Activated CD4-positive, alpha-beta memory T cell treated with anti-CD3 and anti-CD28 coated beads for 36 hours (primary cell): ENCODE measurements at regions of chr5 and their contacts with region 1.

Region 1: GRCh38 chr5:163564321-163564938 is 59.0 kb downstream of the MAT2B start:
- DNase-seq: peak; percentile 76
- H3K4me3 Mint-ChIP-seq: no peak overlapping the region
- H3K27ac Mint-ChIP-seq: no peak overlapping the region
- H3K4me1 Mint-ChIP-seq: peaks cover 25% of the 10 kb centered on the region
- H3K27me3 Mint-ChIP-seq: peaks cover 46% of the 10 kb centered on the region

Region 2: DNA sequence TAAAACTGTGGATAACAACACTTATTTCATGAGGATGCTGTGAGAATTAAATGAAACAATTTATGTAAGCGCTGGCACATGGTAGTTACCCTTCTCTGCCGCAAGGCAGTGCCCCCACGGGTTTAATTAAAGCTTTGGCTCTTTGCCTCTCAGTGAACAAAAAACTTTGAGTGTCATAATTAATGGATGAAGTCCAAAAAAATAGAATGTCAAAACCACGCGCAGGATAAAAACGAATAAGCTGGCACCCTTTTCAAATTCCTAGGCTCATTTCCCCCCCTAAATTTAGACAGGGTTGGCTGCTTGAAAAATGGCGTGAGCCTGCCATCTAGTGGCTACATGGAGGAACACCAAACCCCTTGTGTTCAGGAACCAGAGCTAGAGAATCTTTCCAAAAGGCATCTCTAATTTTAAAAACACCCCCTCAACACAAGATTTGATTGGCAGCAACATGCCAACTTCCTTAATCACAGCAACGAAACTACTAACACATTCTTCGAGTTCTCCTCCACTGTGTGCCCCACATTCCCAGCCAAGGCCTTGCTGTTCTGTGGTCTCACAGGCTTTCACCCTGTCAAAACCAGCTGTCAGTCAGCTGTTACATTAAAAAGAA is 156.0 kb before region 1 on chr5:
- CTCF ChIA-PET with region 1: no interaction called
- POLR2A ChIA-PET with region 1: no interaction called
- intact Hi-C with region 1: loop called (anchors 1 kb)
- DNase-seq: peak; percentile 66
- H3K4me3 Mint-ChIP-seq: no peak overlapping the region
- H3K27ac Mint-ChIP-seq: no peak overlapping the region
- H3K4me1 Mint-ChIP-seq: peaks cover 2% of the 10 kb centered on the region
- H3K27me3 Mint-ChIP-seq: peaks cover 4% of the 10 kb centered on the region

Region 3: GRCh38 chr5:163505368-163506094 is 58.9 kb before region 1 on chr5 and contains the start of gene MAT2B:
- CTCF ChIA-PET with region 1: no interaction called
- POLR2A ChIA-PET with region 1: no interaction called
- intact Hi-C with region 1: loop called (anchors 1 kb)
- DNase-seq: peak; percentile 97
- H3K4me3 Mint-ChIP-seq: peak within 1 kb of the TSS; percentile 95
- H3K27ac Mint-ChIP-seq: peak within 1 kb of the TSS; percentile 100
- H3K4me1 Mint-ChIP-seq: peaks cover 28% of the 10 kb centered on the region
- H3K27me3 Mint-ChIP-seq: no peaks in the 10 kb centered on the region
- total RNA-seq, gene MAT2B: 114 to 122 TPM

Region 4: DNA sequence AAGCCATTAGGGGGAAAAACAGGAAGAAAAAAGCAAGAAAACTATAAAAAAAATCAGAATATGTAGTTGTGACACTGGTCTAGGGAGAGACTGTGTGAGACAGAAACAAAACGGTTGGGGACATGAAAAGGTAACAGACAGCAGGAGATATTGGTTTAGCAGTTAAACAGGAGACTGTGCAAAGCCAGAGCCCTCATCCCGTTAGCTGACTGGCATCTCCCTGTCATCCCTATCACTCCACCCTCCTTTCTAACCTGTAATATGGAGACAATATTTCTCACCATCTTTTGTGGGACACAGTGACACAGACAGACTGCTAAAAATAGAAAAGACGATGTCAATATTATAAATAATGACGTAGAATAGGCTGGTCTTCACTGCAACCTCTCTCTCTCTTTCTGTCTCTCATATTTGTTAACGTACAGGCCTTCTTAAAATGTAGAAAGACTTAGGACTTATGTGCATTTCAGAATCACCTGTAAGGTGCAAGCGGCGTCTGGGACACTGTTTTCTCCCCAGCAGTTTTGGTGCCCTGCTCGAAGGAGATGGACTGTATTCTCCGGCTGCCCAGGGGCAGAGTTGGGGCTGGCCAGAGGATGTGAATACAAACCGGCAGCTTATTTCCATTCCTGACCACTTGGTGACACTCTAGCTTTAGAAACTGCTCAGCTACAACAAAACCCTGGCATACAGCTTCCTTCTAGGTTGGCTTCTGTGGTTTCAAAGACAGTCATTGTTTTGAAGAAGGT is 131.6 kb after region 1 on chr5:
- CTCF ChIA-PET with region 1: no interaction called
- POLR2A ChIA-PET with region 1: no interaction called
- intact Hi-C with region 1: loop called (anchors 10 kb)
- DNase-seq: no peak
- H3K4me3 Mint-ChIP-seq: no peak overlapping the region
- H3K27ac Mint-ChIP-seq: no peak overlapping the region
- H3K4me1 Mint-ChIP-seq: no peaks in the 10 kb centered on the region
- H3K27me3 Mint-ChIP-seq: no peaks in the 10 kb centered on the region

Region 5: DNA sequence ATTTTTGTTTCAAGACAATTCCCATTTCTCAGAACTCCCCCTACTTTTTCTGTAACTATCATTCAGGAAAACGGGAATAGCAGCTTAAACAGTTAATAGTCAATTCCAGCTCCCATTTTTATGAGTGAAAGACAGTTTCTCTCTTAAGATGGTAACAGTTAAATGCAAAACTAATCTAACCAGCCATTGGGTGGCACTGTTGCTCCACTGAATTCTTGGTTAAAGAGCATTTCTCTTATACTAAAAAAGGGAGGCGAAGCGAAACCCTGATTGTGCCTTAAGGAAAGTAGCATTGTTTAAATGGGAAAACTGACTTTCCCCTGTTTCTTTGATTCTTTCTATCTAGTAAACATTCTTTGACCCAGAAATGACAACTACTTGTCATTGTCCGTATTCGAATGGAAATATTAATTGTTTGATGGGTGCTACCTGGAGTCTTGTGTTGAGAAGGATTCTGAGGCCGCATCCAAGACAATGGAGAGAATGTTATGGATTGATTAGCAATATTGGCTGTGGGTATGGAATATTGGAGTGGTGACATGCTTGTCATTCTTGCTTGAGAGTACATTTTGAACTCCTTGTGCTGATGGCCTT is 448.7 kb after region 1 on chr5:
- CTCF ChIA-PET with region 1: no interaction called
- POLR2A ChIA-PET with region 1: no interaction called
- intact Hi-C with region 1: loop called (anchors 1 kb)
- DNase-seq: peak; percentile 31
- H3K4me3 Mint-ChIP-seq: no peak overlapping the region
- H3K27ac Mint-ChIP-seq: no peak overlapping the region
- H3K4me1 Mint-ChIP-seq: no peaks in the 10 kb centered on the region
- H3K27me3 Mint-ChIP-seq: no peaks in the 10 kb centered on the region

Region 6: GRCh38 chr5:164504141-164504772 is 939.8 kb after region 1 on chr5:
- CTCF ChIA-PET with region 1: interaction called, 26 read pairs
- POLR2A ChIA-PET with region 1: no interaction called
- intact Hi-C with region 1: loop called (anchors 1 kb)
- DNase-seq: peak; percentile 11
- H3K4me3 Mint-ChIP-seq: no peak overlapping the region
- H3K27ac Mint-ChIP-seq: no peak overlapping the region
- H3K4me1 Mint-ChIP-seq: no peaks in the 10 kb centered on the region
- H3K27me3 Mint-ChIP-seq: no peaks in the 10 kb centered on the region

Region 7: DNA sequence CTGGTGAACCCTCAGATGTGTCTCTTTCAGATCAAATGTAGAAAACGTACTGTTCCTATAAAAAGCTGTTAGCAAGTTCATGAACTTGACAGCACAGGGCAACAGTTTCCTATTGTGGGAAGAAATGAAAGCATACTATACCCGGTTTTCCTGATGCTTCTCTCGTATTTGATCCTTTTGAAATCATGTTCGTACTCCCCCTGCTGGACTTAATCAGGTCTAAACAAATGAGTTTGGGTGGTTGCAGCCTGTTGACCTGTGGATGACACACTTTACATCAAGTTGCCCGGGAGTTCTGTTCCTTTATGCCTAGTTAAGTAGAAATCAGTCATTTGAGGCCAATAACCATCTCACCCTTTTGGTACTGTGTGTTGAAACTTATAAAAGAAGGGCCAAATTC is 1933.3 kb after region 1 on chr5:
- CTCF ChIA-PET with region 1: no interaction called
- POLR2A ChIA-PET with region 1: no interaction called
- intact Hi-C with region 1: loop called (anchors 10 kb)
- DNase-seq: no peak
- H3K4me3 Mint-ChIP-seq: no peak overlapping the region
- H3K27ac Mint-ChIP-seq: no peak overlapping the region
- H3K4me1 Mint-ChIP-seq: no peaks in the 10 kb centered on the region
- H3K27me3 Mint-ChIP-seq: no peaks in the 10 kb centered on the region